Prostate gland (tissue), 2 donors: ENCODE measurements at regions of chr2 and their contacts with region 1.

Region 1: GRCh38 chr2:219402665-219403515 is 15.2 kb upstream of the DNPEP start:
- DNase-seq: peak; percentile 66
- H3K4me3 ChIP-seq: no peak overlapping the region
- H3K27ac ChIP-seq: no peak overlapping the region
- H3K4me1 ChIP-seq: peaks cover 3% of the 10 kb centered on the region
- H3K27me3 ChIP-seq: no peaks in the 10 kb centered on the region
- CTCF ChIP-seq: peak; percentile 56 to 91 (median 84)
- POLR2A ChIP-seq: no peak

Region 2: GRCh38 chr2:219362524-219363164 is 40.2 kb before region 1 on chr2:
- intact Hi-C with region 1: no loop called
- DNase-seq: no peak
- H3K4me3 ChIP-seq: no peak overlapping the region
- H3K27ac ChIP-seq: no peak overlapping the region
- H3K4me1 ChIP-seq: no peaks in the 10 kb centered on the region
- H3K27me3 ChIP-seq: peaks cover 11% of the 10 kb centered on the region
- CTCF ChIP-seq: no peak
- POLR2A ChIP-seq: no peak

Region 3: GRCh38 chr2:219430633-219431615 is 28.0 kb after region 1 on chr2:
- intact Hi-C with region 1: loop called (anchors 1 kb)
- DNase-seq: no peak
- H3K4me3 ChIP-seq: no peak overlapping the region
- H3K27ac ChIP-seq: no peak overlapping the region
- H3K4me1 ChIP-seq: no peaks in the 10 kb centered on the region
- H3K27me3 ChIP-seq: no peaks in the 10 kb centered on the region
- CTCF ChIP-seq: peak in 3 of 4 experiments; percentile 8 to 50 (median 36)
- POLR2A ChIP-seq: no peak

Region 4: GRCh38 chr2:219452838-219453317 is 50.0 kb after region 1 on chr2:
- intact Hi-C with region 1: loop called (anchors 5 kb)
- DNase-seq: peak; percentile 53
- H3K4me3 ChIP-seq: no peak overlapping the region
- H3K27ac ChIP-seq: peak overlapping the region; percentile 64 to 68
- H3K4me1 ChIP-seq: peaks cover 5% of the 10 kb centered on the region
- H3K27me3 ChIP-seq: no peaks in the 10 kb centered on the region
- CTCF ChIP-seq: no peak
- POLR2A ChIP-seq: no peak

Region 5: GRCh38 chr2:219484343-219485200 is 81.7 kb after region 1 on chr2:
- intact Hi-C with region 1: no loop called
- DNase-seq: no peak
- H3K4me3 ChIP-seq: peak overlapping the region; percentile 1 to 22
- H3K27ac ChIP-seq: no peak overlapping the region
- H3K4me1 ChIP-seq: peaks cover 6% of the 10 kb centered on the region
- H3K27me3 ChIP-seq: peaks cover 4% of the 10 kb centered on the region
- CTCF ChIP-seq: no peak
- POLR2A ChIP-seq: no peak

Region 6: DNA sequence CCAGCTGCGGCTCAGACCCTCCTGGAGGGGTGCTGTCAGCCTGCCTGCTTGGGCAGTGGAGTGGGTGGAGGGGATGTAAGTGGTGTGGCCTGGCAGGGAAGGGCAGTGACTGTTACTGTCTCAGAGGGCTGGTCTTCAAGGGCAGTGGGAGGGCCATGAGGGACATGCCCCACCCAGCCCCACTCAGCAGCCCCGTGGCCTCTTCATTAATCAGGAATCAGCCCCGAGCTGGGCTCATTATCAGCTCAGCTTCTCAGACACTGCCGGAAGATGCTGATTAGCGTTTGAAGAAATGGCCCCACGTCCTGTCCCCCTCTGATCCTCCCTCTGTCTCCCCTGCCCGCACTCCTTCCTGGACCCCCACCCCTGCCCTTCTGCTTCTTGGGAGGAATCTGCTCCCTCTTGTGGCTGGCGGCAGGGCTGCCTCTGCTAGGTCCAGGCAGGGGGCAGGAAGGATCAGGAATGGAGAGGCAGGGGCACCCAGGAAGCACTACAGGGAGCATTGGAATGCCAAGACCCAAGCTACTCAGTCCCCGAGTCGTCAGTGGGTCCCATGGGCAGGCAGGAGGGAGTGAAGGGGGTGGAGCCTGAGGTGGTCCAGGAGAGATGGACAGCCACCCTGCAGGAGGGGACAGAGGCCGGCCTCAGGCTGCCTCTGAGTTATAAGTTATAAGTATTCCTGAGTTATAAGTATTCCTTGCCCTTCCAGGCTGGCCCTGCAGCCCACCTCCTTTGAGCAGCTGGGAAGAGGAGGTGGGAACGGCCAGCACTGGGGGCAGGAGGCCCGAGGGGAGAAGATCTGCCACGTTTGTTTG is 118.4 kb after region 1 on chr2:
- intact Hi-C with region 1: loop called (anchors 5 kb)
- DNase-seq: no peak
- H3K4me3 ChIP-seq: no peak overlapping the region
- H3K27ac ChIP-seq: no peak overlapping the region
- H3K4me1 ChIP-seq: peaks cover 3% of the 10 kb centered on the region
- H3K27me3 ChIP-seq: peaks cover 5% of the 10 kb centered on the region
- CTCF ChIP-seq: peak in 2 of 4 experiments; percentile 48 to 53
- POLR2A ChIP-seq: no peak

Region 7: GRCh38 chr2:219642465-219643080 is 239.7 kb after region 1 on chr2:
- intact Hi-C with region 1: loop called (anchors 10 kb)
- DNase-seq: peak; percentile 96
- H3K4me3 ChIP-seq: no peak overlapping the region
- H3K27ac ChIP-seq: no peak overlapping the region
- H3K4me1 ChIP-seq: peaks cover 4% of the 10 kb centered on the region
- H3K27me3 ChIP-seq: no peaks in the 10 kb centered on the region
- CTCF ChIP-seq: peak; percentile 90 to 100 (median 96)
- POLR2A ChIP-seq: no peak

Region 8: GRCh38 chr2:219689676-219690628 is 287.1 kb after region 1 on chr2:
- intact Hi-C with region 1: loop called (anchors 10 kb)
- DNase-seq: peak; percentile 44
- H3K4me3 ChIP-seq: no peak overlapping the region
- H3K27ac ChIP-seq: no peak overlapping the region
- H3K4me1 ChIP-seq: no peaks in the 10 kb centered on the region
- H3K27me3 ChIP-seq: no peaks in the 10 kb centered on the region
- CTCF ChIP-seq: peak; percentile 42 to 84 (median 80)
- POLR2A ChIP-seq: no peak